ENCODE measurements at regions of chr1 and their contacts with region 1.

Region 1: DNA sequence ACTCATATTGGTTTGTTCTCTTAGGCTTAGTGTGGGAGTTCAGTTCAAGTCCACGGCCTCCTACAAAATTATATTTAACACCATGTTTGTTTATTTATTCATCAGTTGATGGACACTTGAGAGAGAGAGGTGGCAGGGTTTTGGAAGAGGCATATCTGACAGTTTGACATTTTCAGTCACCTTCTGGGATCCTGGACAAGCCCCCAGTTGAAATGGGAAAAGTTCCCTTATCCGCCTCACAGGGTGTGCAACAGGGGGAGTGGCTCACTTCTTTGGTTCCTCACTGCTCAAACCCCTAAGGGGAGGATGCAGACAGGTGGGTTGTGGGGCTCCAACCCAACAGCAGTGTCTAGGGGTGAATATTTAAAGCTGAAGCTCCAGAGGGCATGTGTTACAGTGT is 52.3 kb upstream of the TNFSF18 start:
- DNase-seq: no peak
- ATAC-seq: no peak
- H3K4me3 ChIP-seq: no peak overlapping the region
- H3K27ac ChIP-seq: no peak overlapping the region
- H3K4me1 ChIP-seq: no peaks in the 10 kb centered on the region
- H3K27me3 ChIP-seq: no peaks in the 10 kb centered on the region
- CTCF ChIP-seq: no peak
- EP300 ChIP-seq: no peak
- POLR2A ChIP-seq: no peak
- RAD21 ChIP-seq: no peak

Region 2: GRCh38 chr1:172883107-172883791 is 219.8 kb before region 1 on chr1:
- CTCF ChIA-PET with region 1: no interaction called
- POLR2A ChIA-PET with region 1: no interaction called
- in situ Hi-C with region 1: no loop called
- intact Hi-C with region 1: no loop called
- DNase-seq: no peak
- ATAC-seq: no peak
- H3K4me3 ChIP-seq: no peak overlapping the region
- H3K27ac ChIP-seq: no peak overlapping the region
- H3K4me1 ChIP-seq: no peaks in the 10 kb centered on the region
- H3K27me3 ChIP-seq: no peaks in the 10 kb centered on the region
- CTCF ChIP-seq: no peak
- EP300 ChIP-seq: no peak
- POLR2A ChIP-seq: no peak
- RAD21 ChIP-seq: no peak

Region 3: DNA sequence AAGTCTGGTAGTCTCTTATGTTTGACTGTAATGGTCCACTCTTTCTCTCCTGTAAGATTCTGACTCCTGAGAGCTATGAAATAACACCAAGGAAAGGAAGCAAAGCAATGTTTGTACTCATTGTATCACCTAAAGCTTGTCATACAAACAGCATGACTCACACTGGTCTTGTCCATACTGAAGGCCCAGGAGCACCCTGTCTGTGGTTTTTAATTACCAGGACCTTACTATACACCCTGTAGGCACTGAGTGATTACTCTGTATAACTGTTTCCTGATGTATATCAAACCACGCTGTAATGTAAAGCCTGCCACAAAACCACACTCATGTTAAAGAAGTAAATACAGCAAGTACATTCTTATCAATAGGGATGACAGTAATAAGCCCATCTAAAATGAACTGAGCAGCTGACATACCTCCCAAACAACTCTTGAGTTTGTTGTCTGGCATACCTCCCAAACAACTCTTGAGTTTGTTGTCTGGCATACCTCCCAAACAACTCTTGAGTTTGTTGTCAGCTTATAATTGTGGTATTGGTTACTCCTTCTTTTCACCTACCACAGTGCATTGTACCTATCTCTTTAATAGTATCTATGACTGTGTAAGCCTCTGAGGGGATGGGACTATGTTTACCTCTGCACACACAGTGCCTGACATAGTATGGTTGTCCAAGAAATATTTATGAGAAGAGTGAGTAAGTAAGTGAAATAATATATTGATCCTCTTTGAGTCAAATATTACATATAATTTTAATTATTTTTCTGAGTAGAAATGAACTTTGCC is 40.7 kb before region 1 on chr1:
- CTCF ChIA-PET with region 1: no interaction called
- POLR2A ChIA-PET with region 1: no interaction called
- in situ Hi-C with region 1: no loop called
- intact Hi-C with region 1: loop called (anchors 1 kb)
- DNase-seq: peak; percentile 2
- ATAC-seq: no peak; the same call in 2 of the 3 replicates
- H3K4me3 ChIP-seq: no peak overlapping the region
- H3K27ac ChIP-seq: no peak overlapping the region
- H3K4me1 ChIP-seq: no peaks in the 10 kb centered on the region
- H3K27me3 ChIP-seq: no peaks in the 10 kb centered on the region
- CTCF ChIP-seq: no peak
- EP300 ChIP-seq: no peak
- POLR2A ChIP-seq: no peak
- RAD21 ChIP-seq: no peak

Region 4: GRCh38 chr1:173082913-173083312 is 20.1 kb before region 1 on chr1:
- CTCF ChIA-PET with region 1: no interaction called
- POLR2A ChIA-PET with region 1: no interaction called
- in situ Hi-C with region 1: no loop called
- intact Hi-C with region 1: no loop called
- DNase-seq: no peak
- ATAC-seq: no peak
- H3K4me3 ChIP-seq: no peak overlapping the region
- H3K27ac ChIP-seq: no peak overlapping the region
- H3K4me1 ChIP-seq: no peaks in the 10 kb centered on the region
- H3K27me3 ChIP-seq: no peaks in the 10 kb centered on the region
- CTCF ChIP-seq: no peak
- EP300 ChIP-seq: no peak
- POLR2A ChIP-seq: no peak
- RAD21 ChIP-seq: no peak

Region 5: GRCh38 chr1:173161510-173162221 is 58.7 kb after region 1 on chr1:
- CTCF ChIA-PET with region 1: no interaction called
- POLR2A ChIA-PET with region 1: no interaction called
- in situ Hi-C with region 1: no loop called
- intact Hi-C with region 1: no loop called
- DNase-seq: no peak
- ATAC-seq: no peak
- H3K4me3 ChIP-seq: no peak overlapping the region
- H3K27ac ChIP-seq: no peak overlapping the region
- H3K4me1 ChIP-seq: peaks cover 9% of the 10 kb centered on the region; the same call in 1 of the 2 replicates
- H3K27me3 ChIP-seq: no peaks in the 10 kb centered on the region
- CTCF ChIP-seq: no peak
- EP300 ChIP-seq: no peak
- POLR2A ChIP-seq: no peak
- RAD21 ChIP-seq: no peak